ENCODE measurements at regions of chr4 and their contacts with region 1.

Region 1: GRCh38 chr4:146916479-146917076 is 29.1 kb downstream of the TTC29 start:
- ATAC-seq: peak in 1 of 8 experiments; percentile 17
- H3K4me3 ChIP-seq: no peak overlapping the region
- H3K27ac ChIP-seq: no peak overlapping the region
- H3K4me1 ChIP-seq: no peaks in the 10 kb centered on the region

Region 2: GRCh38 chr4:146095091-146095690 is 821.4 kb before region 1 on chr4:
- in situ Hi-C with region 1: no loop called
- ATAC-seq: peak in 2 of 8 experiments; percentile 23 to 32
- H3K4me3 ChIP-seq: no peak overlapping the region
- H3K27ac ChIP-seq: no peak overlapping the region
- H3K4me1 ChIP-seq: no peaks in the 10 kb centered on the region

Region 3: DNA sequence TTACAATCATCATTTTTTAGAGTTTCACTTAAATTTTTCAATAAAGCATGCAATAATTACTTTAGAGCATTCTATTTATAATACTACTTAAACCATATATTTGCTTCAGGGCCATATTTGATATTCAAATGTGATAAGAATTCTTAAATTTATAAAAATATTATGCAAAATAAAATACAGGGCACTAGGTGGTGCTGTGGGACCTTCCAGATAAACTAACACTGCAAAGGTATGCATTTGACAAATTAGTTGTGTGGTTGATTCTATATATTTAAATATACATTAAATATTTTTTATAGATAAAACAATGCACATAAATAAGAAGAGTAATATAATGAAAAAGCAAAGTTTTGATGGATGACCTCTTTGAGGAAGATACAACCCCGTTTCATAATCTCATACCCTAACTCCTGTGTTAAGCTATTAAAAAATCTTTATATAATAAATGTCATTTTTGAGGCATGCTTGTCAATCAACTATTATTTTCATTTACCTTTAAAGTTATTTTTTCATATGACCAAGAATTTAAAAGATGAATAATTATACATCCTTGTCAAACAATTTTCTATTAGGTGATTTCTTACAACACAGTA is 573.9 kb before region 1 on chr4:
- in situ Hi-C with region 1: loop called in 5 of 9 experiments (anchors 25 kb)
- ATAC-seq: no peak
- H3K4me3 ChIP-seq: no peak overlapping the region
- H3K27ac ChIP-seq: no peak overlapping the region
- H3K4me1 ChIP-seq: peaks cover 0 to 3% of the 10 kb centered on the region in 2 donors

Region 4: GRCh38 chr4:146506272-146506671 is 410.3 kb before region 1 on chr4:
- in situ Hi-C with region 1: no loop called
- ATAC-seq: no peak
- H3K4me3 ChIP-seq: no peak overlapping the region
- H3K27ac ChIP-seq: no peak overlapping the region
- H3K4me1 ChIP-seq: no peaks in the 10 kb centered on the region

Region 5: GRCh38 chr4:146545102-146545501 is 371.5 kb before region 1 on chr4:
- in situ Hi-C with region 1: loop called in 1 of 9 experiments (anchors 25 kb)
- ATAC-seq: peak in 3 of 8 experiments; percentile 68 to 87 (median 74)
- H3K4me3 ChIP-seq: no peak overlapping the region
- H3K27ac ChIP-seq: no peak overlapping the region
- H3K4me1 ChIP-seq: no peaks in the 10 kb centered on the region

Region 6: GRCh38 chr4:147037069-147037468 is 120.5 kb after region 1 on chr4:
- in situ Hi-C with region 1: no loop called
- ATAC-seq: no peak
- H3K4me3 ChIP-seq: no peak overlapping the region
- H3K27ac ChIP-seq: no peak overlapping the region
- H3K4me1 ChIP-seq: peaks cover 3 to 8% of the 10 kb centered on the region in 2 donors

Region 7: GRCh38 chr4:147111033-147111367 is 194.4 kb after region 1 on chr4:
- in situ Hi-C with region 1: no loop called
- ATAC-seq: peak in 3 of 8 experiments; percentile 60 to 71 (median 65)
- H3K4me3 ChIP-seq: no peak overlapping the region
- H3K27ac ChIP-seq: no peak overlapping the region
- H3K4me1 ChIP-seq: no peaks in the 10 kb centered on the region

Measured in motor neuron (in vitro differentiated cells).